AG04449 (cell line): ENCODE measurements at regions of chr15 and their contacts with region 1.

Region 1: DNA sequence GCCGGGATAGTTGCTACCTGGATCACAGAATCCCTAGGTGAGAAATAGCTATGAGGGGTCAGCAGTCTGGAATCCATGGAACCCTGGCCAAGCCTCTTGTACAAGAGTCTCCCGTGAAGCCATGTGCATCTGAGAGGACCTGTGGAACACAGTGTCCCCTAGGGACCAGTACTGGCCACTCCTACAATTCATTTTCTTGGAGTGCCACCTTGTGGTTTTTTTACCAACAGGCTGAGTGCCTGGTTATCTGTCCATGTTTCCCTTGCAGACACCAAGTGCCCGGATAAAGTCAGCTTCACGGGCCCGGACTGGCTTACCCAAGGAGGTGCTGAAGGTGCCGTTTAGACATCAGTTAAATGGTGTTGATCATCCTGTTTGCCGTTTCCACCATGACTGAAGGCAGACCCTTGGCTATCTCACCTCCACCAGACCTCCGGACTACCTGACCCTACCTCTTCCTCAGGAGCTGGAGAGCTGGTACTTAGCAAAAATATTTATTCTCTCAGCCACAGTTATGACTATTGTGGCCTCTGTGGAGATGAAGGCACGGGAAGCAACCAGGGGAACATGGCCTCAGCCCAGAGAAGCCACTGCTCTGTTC is 93.9 kb downstream of the RBPMS2 start:
- DNase-seq: no peak
- H3K4me3 ChIP-seq: no peak overlapping the region
- CTCF ChIP-seq: peak; percentile 42

Region 2: GRCh38 chr15:64344651-64345294 is 336.8 kb before region 1 on chr15:
- CTCF ChIA-PET with region 1: no interaction called
- POLR2A ChIA-PET with region 1: no interaction called
- DNase-seq: no peak
- H3K4me3 ChIP-seq: no peak overlapping the region
- CTCF ChIP-seq: no peak

Region 3: GRCh38 chr15:64422697-64423096 is 258.8 kb before region 1 on chr15:
- CTCF ChIA-PET with region 1: interaction called, 128 read pairs
- POLR2A ChIA-PET with region 1: no interaction called
- DNase-seq: no peak
- H3K4me3 ChIP-seq: no peak overlapping the region
- CTCF ChIP-seq: no peak

Region 4: DNA sequence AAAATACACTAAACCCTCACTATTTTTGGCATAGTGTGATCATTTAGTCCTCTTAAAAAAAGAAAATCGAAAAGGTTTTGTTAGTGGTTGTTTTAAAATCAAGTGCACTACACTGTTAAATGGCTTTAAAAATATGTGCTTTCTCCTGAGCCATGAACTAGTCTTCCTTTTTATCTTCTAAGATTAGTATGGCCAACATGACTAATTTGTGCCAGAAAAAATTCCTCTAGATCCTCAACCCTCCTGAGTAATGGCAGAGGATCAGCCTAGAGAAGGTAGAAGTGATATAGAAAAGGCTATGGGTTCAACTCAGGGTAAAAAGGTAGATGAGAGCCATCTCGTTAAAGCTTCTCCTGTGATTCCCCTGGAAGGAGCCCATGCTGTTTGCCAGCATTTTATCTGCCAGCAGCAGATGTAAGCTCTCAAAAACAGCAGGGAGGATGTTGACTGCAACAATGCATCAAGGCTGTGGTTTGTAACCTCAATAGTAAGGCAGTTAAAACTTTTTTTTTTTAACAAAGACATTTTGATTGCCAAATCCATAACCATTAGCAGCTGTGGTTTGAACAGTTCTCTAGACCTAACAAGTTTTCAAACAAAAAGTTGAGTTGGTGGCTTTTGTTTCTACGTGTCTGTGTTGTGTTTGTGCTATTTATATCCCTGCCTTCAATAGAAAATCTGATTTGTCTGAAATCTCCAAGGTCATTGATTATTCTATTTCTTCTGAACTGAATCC is 251.4 kb before region 1 on chr15:
- CTCF ChIA-PET with region 1: interaction called, 128 read pairs
- POLR2A ChIA-PET with region 1: interaction called, 3 read pairs
- DNase-seq: peak; percentile 60
- H3K4me3 ChIP-seq: no peak overlapping the region
- CTCF ChIP-seq: no peak

Region 5: GRCh38 chr15:64702816-64703646 is 21.5 kb after region 1 on chr15:
- CTCF ChIA-PET with region 1: interaction called, 127 read pairs
- POLR2A ChIA-PET with region 1: no interaction called
- DNase-seq: peak; percentile 26
- H3K4me3 ChIP-seq: peak overlapping the region; percentile 91
- CTCF ChIP-seq: no peak